Aorta (tissue), 5 donors: ENCODE measurements at regions of chr20 and their contacts with region 1.

Region 1: DNA sequence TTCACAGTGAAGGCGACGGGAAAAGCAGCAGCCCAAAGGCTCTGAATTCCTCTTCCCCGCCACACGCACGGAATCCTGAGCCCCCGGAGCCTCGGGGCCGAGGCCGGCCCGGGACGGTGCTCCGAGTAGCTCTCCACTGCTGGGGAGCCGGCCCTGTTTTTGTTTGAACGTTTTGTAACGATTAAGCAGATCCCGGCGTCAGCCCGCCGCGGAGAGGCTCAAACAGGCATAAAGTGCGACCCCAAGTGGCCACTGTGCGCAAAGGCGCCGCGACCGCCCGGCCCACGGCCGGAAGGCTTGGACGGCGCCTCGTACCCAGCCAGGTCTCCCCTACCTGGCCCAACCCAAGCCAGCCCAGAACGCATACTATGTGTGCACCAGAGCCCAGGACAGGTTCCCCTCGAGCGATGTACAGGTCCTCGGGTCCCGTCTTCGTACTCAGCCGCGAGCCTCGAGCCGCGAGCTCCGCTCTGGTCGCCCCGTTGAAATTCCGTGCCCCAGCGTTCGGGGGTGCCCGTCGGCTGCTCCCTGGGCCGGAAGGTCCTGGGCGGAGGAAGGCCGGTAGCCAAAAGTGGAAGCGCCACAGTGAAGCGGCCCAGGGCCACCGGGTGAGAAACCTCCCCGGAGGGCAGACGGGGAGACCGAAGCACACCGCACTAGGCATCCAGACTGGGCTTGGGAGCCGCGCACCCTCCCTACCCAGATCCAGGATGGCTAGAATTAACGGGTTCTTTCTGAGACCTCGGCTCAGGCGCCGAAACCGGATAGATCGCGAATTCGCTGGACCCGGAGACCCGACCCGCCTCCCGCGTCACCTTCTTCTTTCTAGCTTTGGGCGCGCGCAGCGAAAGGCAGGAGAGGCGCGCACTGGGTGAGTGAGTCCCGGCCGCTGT is 1.2 kb upstream of the MAFB start:
- DNase-seq: peak; percentile 95 to 98
- ATAC-seq: peak; percentile 89
- H3K4me3 ChIP-seq: peak overlapping the region in 1 of 2 donors; percentile 10
- H3K27ac ChIP-seq: peak overlapping the region; percentile 62 to 85
- H3K4me1 ChIP-seq: no peaks in the 10 kb centered on the region
- H3K27me3 ChIP-seq: no peaks in the 10 kb centered on the region

Region 2: GRCh38 chr20:40160097-40160550 is 530.1 kb before region 1 on chr20:
- intact Hi-C with region 1: loop called (anchors 5 kb)
- DNase-seq: peak in 1 of 2 donors; percentile 64
- ATAC-seq: peak; percentile 80
- H3K4me3 ChIP-seq: no peak overlapping the region
- H3K27ac ChIP-seq: no peak overlapping the region
- H3K4me1 ChIP-seq: no peaks in the 10 kb centered on the region
- H3K27me3 ChIP-seq: no peaks in the 10 kb centered on the region

Region 3: DNA sequence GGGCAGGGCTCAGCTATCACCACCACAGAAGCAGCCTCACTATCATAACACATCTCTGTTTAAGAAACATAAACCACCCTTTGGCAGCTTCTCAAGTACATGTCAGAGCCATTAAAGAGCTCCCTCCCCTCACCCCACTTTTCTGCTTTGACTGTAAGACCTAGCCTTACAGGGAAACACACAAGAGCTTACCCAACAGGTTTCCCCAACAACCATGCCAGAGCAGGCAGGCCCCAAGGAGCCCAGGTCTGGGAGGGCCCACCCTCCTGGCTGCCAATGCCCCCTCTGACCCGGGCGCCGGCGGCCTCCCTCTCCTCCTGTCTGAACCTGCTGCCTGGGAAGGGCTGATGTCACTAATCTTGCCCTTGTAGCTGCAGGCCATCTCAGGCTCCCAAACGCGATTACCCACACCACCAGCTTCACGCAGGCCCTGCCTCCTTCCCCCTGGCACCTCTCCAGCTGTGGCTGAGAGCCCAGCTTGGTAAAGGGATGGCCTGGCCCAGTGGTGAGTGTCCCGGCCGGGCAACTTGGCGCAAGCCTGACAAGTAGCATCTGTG is 403.1 kb before region 1 on chr20:
- intact Hi-C with region 1: loop called in 1 of 2 experiments (anchors 10 kb)
- DNase-seq: peak; percentile 88 to 91
- ATAC-seq: peak; percentile 76
- H3K4me3 ChIP-seq: no peak overlapping the region
- H3K27ac ChIP-seq: peak overlapping the region in 1 of 2 donors; percentile 10
- H3K4me1 ChIP-seq: no peaks in the 10 kb centered on the region
- H3K27me3 ChIP-seq: no peaks in the 10 kb centered on the region

Region 4: DNA sequence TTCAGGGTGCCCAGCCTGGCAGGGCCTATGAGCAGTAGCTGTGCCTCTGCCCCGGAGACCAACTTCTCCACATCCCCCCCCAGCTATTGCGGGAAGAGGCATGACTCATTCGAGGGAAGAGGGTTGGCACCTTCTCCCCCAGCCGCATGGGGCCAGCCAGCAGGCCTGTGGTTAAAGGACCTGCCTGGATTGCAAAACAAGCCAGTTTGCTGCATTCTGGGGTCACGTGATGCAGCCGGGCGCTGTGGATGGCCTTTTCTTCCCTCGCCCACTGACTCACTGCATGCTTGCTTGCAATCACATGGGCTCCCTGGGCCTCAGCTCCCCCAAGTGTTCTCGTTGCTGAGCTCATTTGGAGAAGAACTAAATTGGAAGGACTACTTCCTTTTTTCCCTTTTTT is 183.6 kb before region 1 on chr20:
- intact Hi-C with region 1: loop called in 1 of 2 experiments (anchors 2 kb)
- DNase-seq: peak; percentile 96 to 99
- ATAC-seq: peak; percentile 91
- H3K4me3 ChIP-seq: no peak overlapping the region
- H3K27ac ChIP-seq: no peak overlapping the region
- H3K4me1 ChIP-seq: no peaks in the 10 kb centered on the region
- H3K27me3 ChIP-seq: no peaks in the 10 kb centered on the region

Region 5: GRCh38 chr20:40631119-40631631 is 59.0 kb before region 1 on chr20:
- intact Hi-C with region 1: loop called in 1 of 2 experiments (anchors 5 kb)
- DNase-seq: no peak
- ATAC-seq: no peak
- H3K4me3 ChIP-seq: no peak overlapping the region
- H3K27ac ChIP-seq: no peak overlapping the region
- H3K4me1 ChIP-seq: peaks cover 0 to 9% of the 10 kb centered on the region in 2 donors
- H3K27me3 ChIP-seq: no peaks in the 10 kb centered on the region